HepG2 (cell line): ENCODE measurements at regions of chr2 and their contacts with region 1.

Region 1: GRCh38 chr2:222969491-222969890 is 82.5 kb upstream of the KCNE4 start:
- DNase-seq: no peak
- ATAC-seq: no peak
- H3K4me3 ChIP-seq: no peak overlapping the region
- H3K27ac ChIP-seq: no peak overlapping the region
- H3K4me1 ChIP-seq: peaks cover 24% of the 10 kb centered on the region; the same call in 1 of the 2 replicates
- H3K27me3 ChIP-seq: peaks cover 1 to 53% of the 10 kb centered on the region in 2 experiments; a peak in 4 of 5 replicates
- CTCF ChIP-seq: no peak
- EP300 ChIP-seq: no peak
- POLR2A ChIP-seq: no peak
- RAD21 ChIP-seq: no peak

Region 2: GRCh38 chr2:223008162-223008561 is 38.7 kb after region 1 on chr2:
- CTCF ChIA-PET with region 1: no interaction called
- POLR2A ChIA-PET with region 1: no interaction called
- in situ Hi-C with region 1: no loop called
- intact Hi-C with region 1: no loop called
- DNase-seq: no peak
- ATAC-seq: no peak
- H3K4me3 ChIP-seq: no peak overlapping the region
- H3K27ac ChIP-seq: no peak overlapping the region
- H3K4me1 ChIP-seq: no peaks in the 10 kb centered on the region
- H3K27me3 ChIP-seq: peaks cover 1 to 3% of the 10 kb centered on the region in 2 experiments; a peak in 1 of 5 replicates
- CTCF ChIP-seq: no peak
- EP300 ChIP-seq: no peak
- POLR2A ChIP-seq: no peak
- RAD21 ChIP-seq: no peak

Region 3: DNA sequence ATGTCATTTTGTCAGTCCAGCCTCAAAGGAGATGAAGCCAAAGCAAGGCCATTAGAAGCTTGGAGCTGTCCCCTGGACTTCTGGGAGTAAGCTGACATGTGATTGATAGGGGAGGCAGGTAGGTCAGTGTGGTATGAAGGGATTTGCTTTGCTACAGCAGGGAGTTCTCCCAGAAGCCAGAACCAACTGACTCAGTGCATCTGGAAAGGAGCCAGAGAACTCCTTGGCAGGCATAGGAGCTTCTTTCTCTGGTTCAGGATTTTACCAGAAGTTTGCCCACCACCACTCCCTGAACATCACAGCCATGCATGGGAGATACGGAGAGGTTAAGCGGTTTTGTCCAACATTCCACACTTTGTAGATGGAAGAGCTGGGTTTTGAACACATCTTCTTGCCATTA is 58.0 kb after region 1 on chr2:
- CTCF ChIA-PET with region 1: no interaction called
- POLR2A ChIA-PET with region 1: no interaction called
- in situ Hi-C with region 1: no loop called
- intact Hi-C with region 1: no loop called
- DNase-seq: no peak
- ATAC-seq: no peak
- H3K4me3 ChIP-seq: no peak overlapping the region
- H3K27ac ChIP-seq: no peak overlapping the region
- H3K4me1 ChIP-seq: peaks cover 8% of the 10 kb centered on the region; the same call in 1 of the 2 replicates
- H3K27me3 ChIP-seq: no peaks in the 10 kb centered on the region
- CTCF ChIP-seq: no peak
- EP300 ChIP-seq: no peak
- POLR2A ChIP-seq: no peak
- RAD21 ChIP-seq: no peak

Region 4: DNA sequence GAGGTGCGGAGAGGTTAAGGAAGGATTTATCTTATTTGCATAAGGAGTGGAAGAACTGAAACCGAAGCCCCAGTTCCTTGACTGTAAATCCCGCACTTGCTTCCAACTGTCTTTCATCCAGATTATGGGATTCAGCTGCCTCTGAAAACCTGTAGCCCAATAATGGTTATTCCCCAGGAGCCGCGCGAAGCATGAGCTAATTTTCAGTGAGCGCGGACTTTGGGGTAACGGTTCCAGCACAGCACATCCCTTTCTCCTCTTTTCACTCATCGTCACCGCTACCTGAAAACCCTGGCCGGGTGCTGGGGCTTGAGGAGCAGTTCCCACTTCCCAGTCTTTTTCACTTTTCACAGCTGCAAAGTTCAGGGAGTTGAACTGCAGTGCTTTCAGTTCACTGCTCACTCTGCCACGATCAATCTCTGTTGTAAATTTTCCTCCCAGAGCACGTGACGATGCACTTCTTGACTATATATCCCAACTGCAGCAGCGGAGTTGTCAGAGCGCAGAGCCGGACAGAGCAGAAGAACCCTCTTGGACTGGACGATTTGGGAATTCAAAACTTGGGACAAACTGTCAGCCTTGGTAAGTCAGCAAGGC is 82.3 kb after region 1 on chr2 and contains the start of gene KCNE4:
- CTCF ChIA-PET with region 1: no interaction called
- POLR2A ChIA-PET with region 1: no interaction called
- in situ Hi-C with region 1: no loop called
- intact Hi-C with region 1: no loop called
- DNase-seq: no peak
- ATAC-seq: no peak
- H3K4me3 ChIP-seq: peak within 1 kb of the TSS in 1 of 3 experiments; percentile 21; a peak in 1 of 6 replicates
- H3K27ac ChIP-seq: no peak within 1 kb of the TSS
- H3K4me1 ChIP-seq: no peaks in the 10 kb centered on the region
- H3K27me3 ChIP-seq: peaks cover 0 to 40% of the 10 kb centered on the region in 2 experiments; a peak in 4 of 5 replicates
- CTCF ChIP-seq: no peak
- EP300 ChIP-seq: no peak
- POLR2A ChIP-seq: no peak
- RAD21 ChIP-seq: no peak
- total RNA-seq, gene KCNE4: not detected in 2 replicates

Region 5: GRCh38 chr2:223101340-223102039 is 132.0 kb after region 1 on chr2:
- CTCF ChIA-PET with region 1: interaction called, 28 read pairs
- POLR2A ChIA-PET with region 1: no interaction called
- in situ Hi-C with region 1: loop called (anchors 5 kb)
- intact Hi-C with region 1: loop called (anchors 1 kb)
- DNase-seq: peak; percentile 31
- ATAC-seq: peak; percentile 98
- H3K4me3 ChIP-seq: no peak overlapping the region
- H3K27ac ChIP-seq: no peak overlapping the region
- H3K4me1 ChIP-seq: no peaks in the 10 kb centered on the region
- H3K27me3 ChIP-seq: 0 out of 5 replicates have a peak, but pooled peaks cover 1 to 8% of the 10 kb centered on the region in 2 experiments
- CTCF ChIP-seq: peak; percentile 78
- EP300 ChIP-seq: no peak
- POLR2A ChIP-seq: no peak
- RAD21 ChIP-seq: peak; percentile 54; the same call in 1 of the 2 replicates

Region 6: DNA sequence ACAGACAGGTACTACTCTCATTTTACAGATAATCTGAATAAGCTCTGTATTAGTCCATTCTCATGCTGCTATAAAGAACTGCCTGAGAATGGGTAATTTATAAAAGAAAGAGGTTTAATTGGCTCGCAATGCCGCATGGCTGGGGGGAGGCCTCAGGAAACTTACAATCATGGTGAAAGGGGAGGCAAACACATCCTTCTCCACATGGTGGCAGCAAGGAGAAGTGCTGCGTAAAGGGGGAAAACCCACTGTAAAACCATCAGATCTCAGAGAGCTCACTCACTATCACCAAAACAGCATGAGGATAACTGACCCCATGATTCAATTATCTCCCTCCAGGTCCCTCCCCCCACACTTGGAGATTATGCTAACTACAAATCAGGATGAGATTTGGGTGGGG is 336.9 kb after region 1 on chr2:
- CTCF ChIA-PET with region 1: no interaction called
- POLR2A ChIA-PET with region 1: no interaction called
- in situ Hi-C with region 1: no loop called
- intact Hi-C with region 1: loop called (anchors 1 kb)
- DNase-seq: peak; percentile 9
- ATAC-seq: peak; percentile 56; the same call in 2 of the 3 replicates
- H3K4me3 ChIP-seq: no peak overlapping the region
- H3K27ac ChIP-seq: no peak overlapping the region
- H3K4me1 ChIP-seq: no peaks in the 10 kb centered on the region
- H3K27me3 ChIP-seq: no peaks in the 10 kb centered on the region
- CTCF ChIP-seq: peak; percentile 45
- EP300 ChIP-seq: no peak
- POLR2A ChIP-seq: no peak
- RAD21 ChIP-seq: no peak

Region 7: DNA sequence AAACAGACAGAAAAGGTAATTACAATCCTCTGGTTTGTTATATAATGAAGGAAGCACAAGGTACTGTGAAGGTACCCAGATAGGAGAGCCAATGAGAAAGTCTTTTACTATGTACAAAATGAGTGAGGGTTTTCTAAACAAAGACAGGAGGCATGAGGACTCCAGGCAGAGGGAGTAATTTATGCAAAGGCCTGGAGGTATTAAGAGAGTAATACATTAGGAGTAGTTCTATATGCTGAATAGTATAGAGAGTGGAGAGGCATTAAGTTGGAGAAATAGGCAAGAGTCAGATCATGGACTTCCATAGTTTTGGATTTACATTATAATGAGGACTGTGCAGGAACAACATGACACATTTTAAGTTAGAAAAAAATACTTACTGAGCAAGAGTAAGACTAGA is 416.7 kb after region 1 on chr2:
- CTCF ChIA-PET with region 1: no interaction called
- POLR2A ChIA-PET with region 1: no interaction called
- in situ Hi-C with region 1: no loop called
- intact Hi-C with region 1: loop called (anchors 5 kb)
- DNase-seq: no peak
- ATAC-seq: no peak
- H3K4me3 ChIP-seq: no peak overlapping the region
- H3K27ac ChIP-seq: no peak overlapping the region
- H3K4me1 ChIP-seq: no peaks in the 10 kb centered on the region
- H3K27me3 ChIP-seq: no peaks in the 10 kb centered on the region
- CTCF ChIP-seq: no peak
- EP300 ChIP-seq: no peak
- POLR2A ChIP-seq: no peak
- RAD21 ChIP-seq: no peak